ENCODE measurements at regions of chr10 and their contacts with region 1.

Region 1: GRCh38 chr10:6151087-6151977 is 51.4 kb upstream of the PFKFB3 start:
- DNase-seq: peak; percentile 61 to 81
- H3K4me3 ChIP-seq: peak overlapping the region in 1 of 4 experiments; percentile 26; a peak in 2 of 8 replicates
- H3K27ac ChIP-seq: no peak overlapping the region
- H3K4me1 ChIP-seq: peaks cover 0 to 5% (median 4%) of the 10 kb centered on the region in 4 experiments; a peak in 6 of 7 replicates
- H3K27me3 ChIP-seq: no peaks in the 10 kb centered on the region
- CTCF ChIP-seq: peak; percentile 68 to 87 (median 76)
- EP300 ChIP-seq: no peak
- POLR2A ChIP-seq: no peak
- RAD21 ChIP-seq: peak; percentile 54 to 58

Region 2: DNA sequence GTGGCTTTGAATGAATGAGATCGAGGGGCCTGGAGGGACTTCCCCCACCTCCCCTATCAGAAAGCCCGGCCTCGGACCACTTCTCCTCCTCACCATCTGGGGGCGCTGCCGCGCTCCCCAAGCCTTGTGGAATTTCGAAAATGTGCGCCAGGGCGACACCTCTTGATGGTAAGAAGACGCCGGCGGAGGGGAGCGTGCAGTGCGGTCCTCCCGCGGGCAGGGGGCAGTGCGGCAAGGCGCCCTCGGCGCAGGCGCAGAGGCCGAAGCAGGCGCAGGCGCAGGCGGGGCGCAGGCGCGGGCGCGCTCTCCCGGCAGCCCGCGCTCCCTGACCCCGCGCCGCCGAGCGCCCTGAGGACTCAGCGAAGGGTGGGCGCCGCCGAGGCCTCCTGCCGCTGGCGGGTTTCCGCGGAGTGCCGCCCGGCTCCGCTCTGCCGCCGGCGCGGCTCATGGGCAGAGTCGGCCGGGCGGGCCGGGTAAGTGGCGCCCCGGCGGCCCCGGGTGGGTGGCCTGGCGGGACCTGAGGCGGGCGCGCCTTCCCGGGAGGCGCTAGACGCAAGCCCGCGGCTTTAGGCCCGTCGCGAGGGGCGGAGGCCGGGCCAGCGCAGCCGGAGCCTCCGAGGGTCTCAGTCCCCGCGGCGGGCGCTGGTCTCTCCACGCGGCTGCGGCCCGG is 62.5 kb before region 1 on chr10 and contains the start of gene RBM17:
- CTCF ChIA-PET with region 1: interaction called, 19 read pairs
- POLR2A ChIA-PET with region 1: no interaction called
- DNase-seq: peak; percentile 95 to 100
- H3K4me3 ChIP-seq: peak within 1 kb of the TSS; percentile 88 to 94 (median 92)
- H3K27ac ChIP-seq: peak within 1 kb of the TSS; percentile 74; the same call in 1 of the 2 replicates
- H3K4me1 ChIP-seq: peaks cover 0 to 12% (median 7%) of the 10 kb centered on the region in 4 experiments; a peak in 4 of 7 replicates
- H3K27me3 ChIP-seq: no peaks in the 10 kb centered on the region
- CTCF ChIP-seq: peak; percentile 100
- EP300 ChIP-seq: 0 out of 3 replicates have a peak, but pooled peaks of 1 of the 2 experiments have one; percentile 80
- POLR2A ChIP-seq: peak in 1 of 2 experiments; percentile 69; a peak in 2 of 3 replicates
- RAD21 ChIP-seq: peak; percentile 71 to 80
- total RNA-seq, gene RBM17: 120 and 128 TPM in 2 replicates

Region 3: GRCh38 chr10:6120691-6121090 is 30.6 kb before region 1 on chr10:
- CTCF ChIA-PET with region 1: interaction called, 15 read pairs
- POLR2A ChIA-PET with region 1: interaction called, 3 read pairs
- DNase-seq: no peak
- H3K4me3 ChIP-seq: no peak overlapping the region
- H3K27ac ChIP-seq: no peak overlapping the region
- H3K4me1 ChIP-seq: no peaks in the 10 kb centered on the region; a peak in 2 of 7 replicates
- H3K27me3 ChIP-seq: no peaks in the 10 kb centered on the region
- CTCF ChIP-seq: no peak
- EP300 ChIP-seq: no peak
- POLR2A ChIP-seq: no peak
- RAD21 ChIP-seq: no peak

Region 4: GRCh38 chr10:6136215-6137201 is 14.8 kb before region 1 on chr10:
- CTCF ChIA-PET with region 1: interaction called, 51 read pairs
- POLR2A ChIA-PET with region 1: interaction called, 10 read pairs
- DNase-seq: no peak
- H3K4me3 ChIP-seq: no peak overlapping the region
- H3K27ac ChIP-seq: no peak overlapping the region
- H3K4me1 ChIP-seq: peaks cover 2 to 18% (median 8%) of the 10 kb centered on the region in 4 experiments
- H3K27me3 ChIP-seq: 0 out of 7 replicates have a peak, but pooled peaks cover 0 to 2% (median 0%) of the 10 kb centered on the region in 4 experiments
- CTCF ChIP-seq: no peak
- EP300 ChIP-seq: no peak
- POLR2A ChIP-seq: no peak
- RAD21 ChIP-seq: no peak

Region 5: DNA sequence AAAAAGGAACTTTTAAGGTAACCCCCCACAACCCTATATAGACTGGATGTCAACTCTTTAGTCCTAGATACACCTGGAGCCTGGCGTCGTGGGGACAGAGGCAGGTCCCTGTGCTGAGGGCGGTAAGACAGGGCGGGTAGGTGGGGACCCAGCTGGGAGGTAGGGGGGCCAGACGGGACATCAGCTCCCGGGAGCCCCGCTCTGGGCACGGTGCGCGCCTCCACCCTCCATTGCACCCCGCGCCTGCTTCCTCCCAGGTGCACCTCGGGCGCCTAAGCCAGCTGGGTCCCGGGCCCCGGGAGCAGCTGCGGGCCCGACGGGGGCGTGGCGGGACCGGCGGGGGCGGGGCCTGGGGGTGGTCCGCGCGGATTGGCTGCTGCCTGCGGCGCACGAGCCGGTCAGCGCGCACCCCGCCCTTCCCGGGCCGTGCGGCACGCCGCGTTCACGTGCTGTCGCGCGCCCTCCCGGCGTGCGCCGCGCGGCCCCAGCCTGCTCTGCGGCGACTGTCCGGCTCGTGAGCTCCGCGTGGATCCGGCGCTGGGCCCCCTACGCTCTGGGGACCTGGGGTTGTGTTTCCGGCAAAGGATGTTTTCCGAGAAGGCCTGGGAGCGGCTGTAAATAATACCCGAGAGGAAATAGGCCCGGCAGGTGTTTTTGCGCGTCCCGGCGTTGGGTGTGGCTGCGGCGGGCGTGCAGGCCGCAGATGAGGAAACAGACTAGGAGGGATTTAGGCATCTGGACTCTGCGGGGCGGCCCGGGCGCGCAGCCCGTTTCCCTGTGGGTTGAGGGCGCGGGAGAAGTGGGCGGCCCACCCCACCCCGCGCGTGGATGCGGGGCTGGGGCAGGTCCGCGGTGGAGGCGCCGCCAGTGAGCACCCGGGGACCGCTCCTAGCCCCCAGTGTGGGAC is 12.3 kb after region 1 on chr10:
- CTCF ChIA-PET with region 1: interaction called, 19 read pairs
- POLR2A ChIA-PET with region 1: interaction called, 10 read pairs
- DNase-seq: peak in 1 of 2 experiments; percentile 94
- H3K4me3 ChIP-seq: peak overlapping the region; percentile 39 to 88 (median 54)
- H3K27ac ChIP-seq: no peak overlapping the region
- H3K4me1 ChIP-seq: peaks cover 0 to 2% (median 0%) of the 10 kb centered on the region in 4 experiments; a peak in 1 of 7 replicates
- H3K27me3 ChIP-seq: no peaks in the 10 kb centered on the region
- CTCF ChIP-seq: no peak
- EP300 ChIP-seq: no peak
- POLR2A ChIP-seq: peak in 1 of 2 experiments; percentile 49; a peak in 1 of 3 replicates
- RAD21 ChIP-seq: no peak

Region 6: DNA sequence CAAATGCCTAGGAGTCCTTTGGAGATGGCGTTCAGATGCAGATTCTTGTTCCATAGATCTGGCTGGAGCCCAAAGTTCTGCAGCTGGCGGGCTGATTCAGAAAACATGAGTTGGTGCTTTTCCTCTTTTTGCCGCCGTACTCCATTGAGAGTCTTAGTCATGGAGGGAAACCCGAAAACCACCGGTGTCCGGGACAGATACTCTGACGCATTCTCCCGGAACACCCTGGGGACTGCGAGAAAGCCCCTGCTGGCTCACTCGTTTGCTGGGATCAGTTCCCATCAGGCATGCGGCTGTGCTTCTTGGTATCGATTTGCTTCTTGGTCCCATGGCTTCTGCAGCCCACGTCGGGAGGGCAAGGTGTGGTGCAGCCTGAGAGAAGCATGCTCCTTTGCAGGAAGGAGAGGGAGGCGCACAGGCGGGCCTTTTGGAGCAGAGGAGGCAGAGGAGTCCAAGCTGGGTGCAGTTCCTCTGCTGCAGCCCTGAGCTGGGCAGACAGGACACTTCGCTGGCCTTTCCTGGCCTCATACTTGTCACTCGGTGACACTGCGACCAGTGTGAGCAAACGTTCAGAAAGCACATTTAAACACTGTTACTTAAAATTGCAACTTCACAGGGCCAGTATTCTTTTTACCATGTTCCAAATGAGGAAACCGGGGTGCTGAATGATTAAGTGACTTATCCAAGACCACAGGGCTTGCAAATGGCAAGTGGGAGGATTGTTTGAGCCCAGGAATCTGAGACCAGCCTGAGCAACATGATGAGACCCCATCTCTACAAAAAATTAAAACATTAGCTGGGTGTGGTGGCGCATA is 20.8 kb after region 1 on chr10:
- CTCF ChIA-PET with region 1: interaction called, 15 read pairs
- POLR2A ChIA-PET with region 1: interaction called, 10 read pairs
- DNase-seq: no peak
- H3K4me3 ChIP-seq: no peak overlapping the region
- H3K27ac ChIP-seq: no peak overlapping the region
- H3K4me1 ChIP-seq: no peaks in the 10 kb centered on the region
- H3K27me3 ChIP-seq: no peaks in the 10 kb centered on the region
- CTCF ChIP-seq: no peak
- EP300 ChIP-seq: no peak
- POLR2A ChIP-seq: no peak
- RAD21 ChIP-seq: no peak

Measured in H1 (cell line).